Dorsolateral prefrontal cortex (tissue), 120 donors: ENCODE measurements at regions of chr1 and their contacts with region 1.

Region 1: DNA sequence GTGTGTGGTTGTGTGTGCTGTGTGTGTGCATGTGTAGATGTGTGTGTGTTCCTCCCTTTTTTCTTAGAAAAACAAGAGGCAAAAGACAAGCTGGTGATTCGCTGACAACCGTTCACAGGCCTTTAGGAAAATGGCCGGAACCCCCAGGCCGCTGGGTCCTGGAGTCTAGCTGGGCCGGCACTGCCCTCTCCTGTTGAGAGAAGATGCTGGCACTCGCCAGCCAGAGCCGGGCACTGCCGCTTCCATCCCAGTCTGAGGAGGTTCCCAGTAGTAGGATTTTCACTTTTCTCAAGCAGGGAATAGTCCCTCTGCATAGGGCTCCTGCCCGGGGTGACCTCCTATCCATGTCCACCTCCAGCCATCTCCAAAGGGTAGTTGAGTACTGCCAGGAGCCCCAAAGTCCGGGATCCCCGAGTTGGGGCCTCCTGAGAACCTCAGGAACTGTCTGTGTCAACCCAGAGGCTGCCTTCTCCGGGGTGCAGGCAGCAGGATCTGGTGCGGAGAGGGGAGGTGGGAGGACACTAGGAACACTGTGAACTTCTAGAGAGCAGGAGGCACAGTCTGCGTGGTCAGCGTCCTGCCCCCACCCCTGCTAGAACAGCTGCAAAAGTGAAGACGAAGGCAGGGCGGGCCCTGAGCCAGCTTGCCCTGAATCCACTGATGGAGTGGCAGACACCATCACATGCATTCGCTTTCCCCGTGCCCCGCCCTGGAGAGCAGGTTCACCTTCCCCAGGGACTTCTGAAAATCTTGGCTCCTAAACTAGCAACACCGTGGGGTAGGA is 44.1 kb upstream of the ARHGEF16 start:
- DNase-seq: peak; percentile 40 to 87 (median 84)
- H3K4me3 ChIP-seq: no peak overlapping the region
- H3K27ac ChIP-seq: peak overlapping the region in 5 of 59 donors; percentile 2 to 36 (median 19)
- H3K27me3 ChIP-seq: no peaks in the 10 kb centered on the region
- CTCF ChIP-seq: peak in 55 of 56 donors; percentile 49 to 93 (median 81)

Region 2: GRCh38 chr1:2921970-2922686 is 488.2 kb before region 1 on chr1:
- intact Hi-C with region 1: no loop called
- DNase-seq: no peak
- H3K4me3 ChIP-seq: no peak overlapping the region
- H3K27ac ChIP-seq: no peak overlapping the region
- H3K27me3 ChIP-seq: peaks cover 0 to 13% (median 0%) of the 10 kb centered on the region in 45 donors
- CTCF ChIP-seq: peak in 54 of 56 donors; percentile 24 to 70 (median 52)

Region 3: GRCh38 chr1:3069491-3070303 is 340.6 kb before region 1 on chr1:
- intact Hi-C with region 1: loop called in 1 of 2 experiments (anchors 5 kb)
- DNase-seq: peak in 4 of 10 donors; percentile 38 to 53 (median 42)
- H3K4me3 ChIP-seq: peak overlapping the region; percentile 41 to 79 (median 64)
- H3K27ac ChIP-seq: peak overlapping the region in 53 of 59 donors; percentile 26 to 95 (median 83)
- H3K27me3 ChIP-seq: peaks cover 0 to 93% (median 78%) of the 10 kb centered on the region in 45 donors
- CTCF ChIP-seq: peak in 51 of 56 donors; percentile 12 to 62 (median 37)

Region 4: DNA sequence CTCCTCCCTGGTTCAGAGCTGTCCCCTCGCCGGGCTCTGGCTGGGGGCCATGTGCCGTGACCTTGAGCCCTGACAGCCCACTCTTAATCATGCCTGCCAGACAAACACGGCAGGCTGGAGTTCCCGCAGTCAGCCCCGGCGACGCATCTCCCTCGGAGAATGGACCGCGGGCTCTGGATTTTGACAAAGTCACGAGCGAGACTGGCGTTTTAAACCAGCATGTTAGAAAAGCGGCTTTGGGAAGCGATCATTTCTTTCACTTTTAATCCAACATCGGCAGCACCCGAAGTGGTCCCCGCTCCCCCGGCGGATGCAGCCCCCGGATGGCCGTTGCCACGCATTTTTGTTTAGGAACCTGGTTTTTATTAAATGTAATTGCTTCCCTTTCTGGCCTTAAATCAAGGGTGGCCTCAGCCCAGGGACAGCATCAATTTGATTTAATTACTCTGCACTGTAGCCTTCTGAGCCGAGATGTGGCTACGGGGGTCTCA is 270.4 kb before region 1 on chr1:
- intact Hi-C with region 1: no loop called
- DNase-seq: no peak
- H3K4me3 ChIP-seq: peak overlapping the region in 36 of 59 donors; percentile 1 to 51 (median 26)
- H3K27ac ChIP-seq: peak overlapping the region in 17 of 59 donors; percentile 8 to 73 (median 36)
- H3K27me3 ChIP-seq: peaks cover 0 to 78% (median 14%) of the 10 kb centered on the region in 45 donors
- CTCF ChIP-seq: no peak

Region 5: GRCh38 chr1:3292868-3293562 is 117.3 kb before region 1 on chr1:
- intact Hi-C with region 1: loop called in 1 of 2 experiments (anchors 5 kb)
- DNase-seq: no peak
- H3K4me3 ChIP-seq: no peak overlapping the region
- H3K27ac ChIP-seq: no peak overlapping the region
- H3K27me3 ChIP-seq: peaks cover 0 to 39% (median 3%) of the 10 kb centered on the region in 45 donors
- CTCF ChIP-seq: no peak

Region 6: GRCh38 chr1:3350500-3351261 is 59.7 kb before region 1 on chr1:
- intact Hi-C with region 1: loop called in 1 of 2 experiments (anchors 2 kb)
- DNase-seq: peak; percentile 33 to 86 (median 82)
- H3K4me3 ChIP-seq: peak overlapping the region in 6 of 59 donors; percentile 2 to 30 (median 18)
- H3K27ac ChIP-seq: peak overlapping the region in 55 of 59 donors; percentile 2 to 89 (median 78)
- H3K27me3 ChIP-seq: peaks cover 0 to 55% (median 6%) of the 10 kb centered on the region in 45 donors
- CTCF ChIP-seq: peak in 35 of 56 donors; percentile 13 to 61 (median 33)